PC-3 (cell line): ENCODE measurements at regions of chr18 and their contacts with region 1.

Region 1: GRCh38 chr18:69757733-69758132 is 189.9 kb downstream of the CD226 start:
- DNase-seq: peak; percentile 70
- ATAC-seq: peak; percentile 58
- H3K4me3 ChIP-seq: no peak overlapping the region
- H3K27ac ChIP-seq: peak overlapping the region; percentile 96
- H3K4me1 ChIP-seq: peaks cover 37% of the 10 kb centered on the region
- H3K27me3 ChIP-seq: no peaks in the 10 kb centered on the region
- CTCF ChIP-seq: no peak

Region 2: GRCh38 chr18:69216321-69216720 is 541.4 kb before region 1 on chr18:
- CTCF ChIA-PET with region 1: no interaction called
- POLR2A ChIA-PET with region 1: no interaction called
- intact Hi-C with region 1: no loop called
- DNase-seq: no peak
- ATAC-seq: no peak
- H3K4me3 ChIP-seq: no peak overlapping the region
- H3K27ac ChIP-seq: no peak overlapping the region
- H3K4me1 ChIP-seq: no peaks in the 10 kb centered on the region
- H3K27me3 ChIP-seq: no peaks in the 10 kb centered on the region
- CTCF ChIP-seq: no peak

Region 3: GRCh38 chr18:69636529-69637301 is 121.0 kb before region 1 on chr18:
- CTCF ChIA-PET with region 1: no interaction called
- POLR2A ChIA-PET with region 1: no interaction called
- intact Hi-C with region 1: loop called (anchors 5 kb)
- DNase-seq: no peak
- ATAC-seq: peak; percentile 54; the same call in 1 of the 2 replicates
- H3K4me3 ChIP-seq: no peak overlapping the region
- H3K27ac ChIP-seq: no peak overlapping the region
- H3K4me1 ChIP-seq: no peaks in the 10 kb centered on the region
- H3K27me3 ChIP-seq: peaks cover 3% of the 10 kb centered on the region; the same call in 1 of the 2 replicates
- CTCF ChIP-seq: peak; percentile 52

Region 4: DNA sequence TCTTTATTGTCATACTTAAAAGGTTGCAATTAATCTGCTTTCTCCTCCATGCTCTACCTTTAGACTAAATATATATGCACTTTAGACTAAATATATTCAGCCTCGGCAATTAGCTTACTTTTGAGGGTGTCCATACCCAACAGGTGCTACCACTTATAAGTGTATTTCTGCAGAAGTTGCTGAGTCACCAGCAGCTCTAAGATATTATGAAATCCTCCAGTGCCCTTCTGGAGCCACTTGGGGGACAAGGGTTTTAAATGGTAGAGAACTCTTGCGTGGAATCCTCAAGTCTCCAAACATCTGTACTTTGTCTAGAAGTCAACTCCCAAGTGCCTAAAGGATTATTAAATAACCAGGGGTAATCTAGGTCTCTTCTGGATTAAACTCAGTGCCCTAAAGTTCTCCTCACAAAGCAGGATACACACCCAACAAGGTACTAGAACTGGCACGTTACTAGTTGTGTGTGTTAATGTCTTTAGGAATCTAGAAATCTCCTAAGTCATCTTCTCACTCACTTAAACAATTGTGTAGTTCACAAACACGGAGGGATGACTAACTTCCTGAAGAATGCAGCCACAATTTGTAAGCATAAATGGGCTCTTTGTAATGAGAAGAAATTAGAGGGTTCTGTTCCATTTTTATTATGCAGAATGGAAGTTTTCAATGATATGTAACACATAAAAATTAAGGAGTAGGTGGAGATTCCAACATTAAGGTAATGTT is 30.3 kb after region 1 on chr18:
- CTCF ChIA-PET with region 1: no interaction called
- POLR2A ChIA-PET with region 1: no interaction called
- intact Hi-C with region 1: loop called (anchors 1 kb)
- DNase-seq: peak; percentile 75
- ATAC-seq: peak; percentile 88
- H3K4me3 ChIP-seq: no peak overlapping the region
- H3K27ac ChIP-seq: peak overlapping the region; percentile 66
- H3K4me1 ChIP-seq: peaks cover 28% of the 10 kb centered on the region
- H3K27me3 ChIP-seq: no peaks in the 10 kb centered on the region
- CTCF ChIP-seq: no peak

Region 5: DNA sequence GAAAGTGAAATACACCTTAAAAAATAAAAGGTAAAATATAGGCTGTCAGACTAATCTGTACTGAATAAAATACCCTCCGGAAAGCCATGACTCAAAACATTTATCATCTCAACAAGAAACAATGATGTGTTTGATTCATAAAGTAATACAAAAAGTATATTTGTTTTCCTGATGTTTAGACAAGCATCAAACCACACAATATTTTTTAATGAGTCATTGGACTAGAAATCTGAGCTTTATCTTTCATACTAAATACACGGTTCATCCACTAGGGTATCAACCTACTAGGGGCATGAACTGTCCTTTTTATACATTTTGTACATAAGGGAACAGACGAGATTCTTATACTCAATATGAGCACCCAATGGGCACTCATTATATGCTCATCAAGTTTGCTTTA is 158.7 kb after region 1 on chr18:
- CTCF ChIA-PET with region 1: no interaction called
- POLR2A ChIA-PET with region 1: no interaction called
- intact Hi-C with region 1: loop called (anchors 1 kb)
- DNase-seq: peak; percentile 79
- ATAC-seq: peak; percentile 92
- H3K4me3 ChIP-seq: no peak overlapping the region
- H3K27ac ChIP-seq: peak overlapping the region; percentile 28
- H3K4me1 ChIP-seq: peaks cover 18% of the 10 kb centered on the region
- H3K27me3 ChIP-seq: no peaks in the 10 kb centered on the region
- CTCF ChIP-seq: peak; percentile 52; the same call in 1 of the 2 replicates

Region 6: GRCh38 chr18:70072678-70073077 is 314.9 kb after region 1 on chr18:
- CTCF ChIA-PET with region 1: interaction called, 3 read pairs
- POLR2A ChIA-PET with region 1: no interaction called
- intact Hi-C with region 1: loop called (anchors 5 kb)
- DNase-seq: peak; percentile 33
- ATAC-seq: peak; percentile 66
- H3K4me3 ChIP-seq: no peak overlapping the region
- H3K27ac ChIP-seq: no peak overlapping the region
- H3K4me1 ChIP-seq: no peaks in the 10 kb centered on the region
- H3K27me3 ChIP-seq: no peaks in the 10 kb centered on the region
- CTCF ChIP-seq: peak; percentile 44